Activated naive CD4-positive, alpha-beta T cell treated with anti-CD3 and anti-CD28 coated beads for 36 hours (primary cell): ENCODE measurements at regions of chr7 and their contacts with region 1.

Region 1: DNA sequence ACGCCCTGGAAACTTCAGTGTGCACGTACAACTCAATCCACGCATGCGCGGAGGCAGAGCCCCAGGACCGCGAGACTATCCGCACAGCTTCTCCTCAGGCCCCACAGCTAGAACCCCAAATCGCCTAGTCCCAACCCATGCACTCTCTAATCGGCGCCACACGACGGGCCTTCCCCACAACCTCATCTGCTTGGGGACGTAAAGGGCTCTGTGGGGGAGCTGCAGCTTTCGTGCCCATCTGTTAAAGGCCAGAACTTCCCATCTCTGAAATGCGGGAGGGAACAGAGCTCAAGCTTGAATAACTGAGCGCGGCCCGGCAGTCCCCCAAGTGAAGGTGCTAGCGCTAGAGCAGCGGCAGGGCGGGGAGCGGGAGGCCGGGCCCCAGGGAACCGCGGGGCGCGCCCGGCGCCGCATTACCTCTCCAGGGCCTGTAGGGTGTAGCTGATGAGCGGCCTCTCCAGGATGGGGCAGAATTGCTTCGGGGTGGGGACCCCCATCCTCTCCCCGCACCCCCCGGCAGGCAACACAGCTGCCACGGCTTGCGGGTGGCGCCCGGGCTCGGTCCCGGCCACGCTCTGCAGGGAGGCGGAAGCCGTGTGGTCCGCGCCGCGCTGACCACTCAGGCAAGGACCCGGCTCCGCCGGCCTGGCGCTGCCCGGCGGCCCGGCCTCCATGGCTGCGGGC is 547 bp downstream of the CRPPA start:
- DNase-seq: peak; percentile 90
- H3K4me3 Mint-ChIP-seq: peak overlapping the region; percentile 92
- H3K27ac Mint-ChIP-seq: peak overlapping the region; percentile 89
- H3K4me1 Mint-ChIP-seq: peaks cover 13% of the 10 kb centered on the region
- H3K27me3 Mint-ChIP-seq: no peaks in the 10 kb centered on the region

Region 2: DNA sequence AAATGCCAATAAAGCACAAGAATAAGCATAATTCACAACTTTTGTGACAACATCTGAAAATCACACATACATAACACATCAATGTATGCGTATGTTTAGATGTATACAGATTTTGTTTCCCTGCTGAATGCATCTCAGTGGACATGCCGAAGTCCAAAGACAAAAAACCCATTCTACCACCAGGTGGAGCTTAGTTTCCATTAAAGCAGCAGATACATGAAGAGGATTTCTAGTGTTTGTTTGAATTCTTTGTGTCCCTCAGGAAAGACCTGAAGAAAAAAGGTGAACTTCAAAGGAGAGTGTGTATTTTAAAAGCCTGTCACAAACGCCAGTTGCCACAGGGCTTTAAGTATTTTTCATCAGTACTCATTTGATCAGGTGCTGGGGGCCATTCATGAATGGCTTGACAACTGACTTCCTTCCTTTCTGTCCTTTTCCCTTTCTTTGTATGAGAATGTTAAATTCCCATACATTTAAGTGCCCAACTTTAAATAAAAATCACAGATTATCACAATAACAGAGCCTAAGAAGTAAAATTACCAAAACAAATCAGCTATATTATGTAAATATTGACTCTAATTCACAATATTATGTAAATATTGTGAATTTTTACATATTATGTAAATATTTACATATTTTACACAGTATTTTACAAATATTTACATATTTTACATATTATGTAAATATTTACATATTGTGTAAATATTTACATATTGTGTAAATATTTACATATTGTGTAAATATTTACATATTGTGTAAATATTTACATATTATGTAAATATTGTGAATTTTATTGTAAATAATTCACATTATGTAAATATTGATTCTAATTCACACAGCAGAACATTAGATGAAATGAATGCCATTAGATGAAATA is 342.5 kb before region 1 on chr7:
- CTCF ChIA-PET with region 1: no interaction called
- intact Hi-C with region 1: loop called (anchors 1 kb)
- DNase-seq: peak; percentile 30
- H3K4me3 Mint-ChIP-seq: no peak overlapping the region
- H3K27ac Mint-ChIP-seq: no peak overlapping the region
- H3K4me1 Mint-ChIP-seq: no peaks in the 10 kb centered on the region
- H3K27me3 Mint-ChIP-seq: no peaks in the 10 kb centered on the region

Region 3: GRCh38 chr7:16431646-16432424 is 11.0 kb after region 1 on chr7:
- CTCF ChIA-PET with region 1: interaction called, 23 read pairs
- intact Hi-C with region 1: no loop called
- DNase-seq: peak; percentile 54
- H3K4me3 Mint-ChIP-seq: no peak overlapping the region
- H3K27ac Mint-ChIP-seq: no peak overlapping the region
- H3K4me1 Mint-ChIP-seq: no peaks in the 10 kb centered on the region
- H3K27me3 Mint-ChIP-seq: no peaks in the 10 kb centered on the region

Region 4: DNA sequence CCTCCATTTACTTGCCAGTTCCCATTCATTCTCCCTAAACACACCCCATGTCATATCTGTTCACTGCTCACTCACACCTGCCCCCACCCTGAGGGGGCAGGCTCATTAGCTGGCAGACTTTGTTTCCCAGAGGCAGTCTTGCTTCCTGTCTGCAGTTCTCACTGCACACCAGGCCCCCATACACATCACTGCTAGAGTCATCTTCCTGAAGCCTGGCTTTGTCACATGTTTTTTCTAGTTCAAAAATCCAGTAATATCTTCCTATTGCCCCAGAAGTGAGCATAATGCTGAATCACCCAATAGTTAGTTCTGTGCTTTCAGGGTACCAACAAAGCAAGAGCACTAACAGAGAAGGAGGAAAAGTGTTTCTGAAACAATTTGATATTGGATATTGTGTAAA is 107.7 kb after region 1 on chr7:
- CTCF ChIA-PET with region 1: no interaction called
- intact Hi-C with region 1: no loop called
- DNase-seq: peak; percentile 16
- H3K4me3 Mint-ChIP-seq: no peak overlapping the region
- H3K27ac Mint-ChIP-seq: no peak overlapping the region
- H3K4me1 Mint-ChIP-seq: peaks cover 4% of the 10 kb centered on the region
- H3K27me3 Mint-ChIP-seq: no peaks in the 10 kb centered on the region

Region 5: GRCh38 chr7:16619979-16620408 is 199.2 kb after region 1 on chr7:
- CTCF ChIA-PET with region 1: no interaction called
- intact Hi-C with region 1: loop called (anchors 1 kb)
- DNase-seq: peak; percentile 33
- H3K4me3 Mint-ChIP-seq: peak overlapping the region; percentile 23
- H3K27ac Mint-ChIP-seq: peak overlapping the region; percentile 81
- H3K4me1 Mint-ChIP-seq: peaks cover 13% of the 10 kb centered on the region
- H3K27me3 Mint-ChIP-seq: no peaks in the 10 kb centered on the region

Region 6: DNA sequence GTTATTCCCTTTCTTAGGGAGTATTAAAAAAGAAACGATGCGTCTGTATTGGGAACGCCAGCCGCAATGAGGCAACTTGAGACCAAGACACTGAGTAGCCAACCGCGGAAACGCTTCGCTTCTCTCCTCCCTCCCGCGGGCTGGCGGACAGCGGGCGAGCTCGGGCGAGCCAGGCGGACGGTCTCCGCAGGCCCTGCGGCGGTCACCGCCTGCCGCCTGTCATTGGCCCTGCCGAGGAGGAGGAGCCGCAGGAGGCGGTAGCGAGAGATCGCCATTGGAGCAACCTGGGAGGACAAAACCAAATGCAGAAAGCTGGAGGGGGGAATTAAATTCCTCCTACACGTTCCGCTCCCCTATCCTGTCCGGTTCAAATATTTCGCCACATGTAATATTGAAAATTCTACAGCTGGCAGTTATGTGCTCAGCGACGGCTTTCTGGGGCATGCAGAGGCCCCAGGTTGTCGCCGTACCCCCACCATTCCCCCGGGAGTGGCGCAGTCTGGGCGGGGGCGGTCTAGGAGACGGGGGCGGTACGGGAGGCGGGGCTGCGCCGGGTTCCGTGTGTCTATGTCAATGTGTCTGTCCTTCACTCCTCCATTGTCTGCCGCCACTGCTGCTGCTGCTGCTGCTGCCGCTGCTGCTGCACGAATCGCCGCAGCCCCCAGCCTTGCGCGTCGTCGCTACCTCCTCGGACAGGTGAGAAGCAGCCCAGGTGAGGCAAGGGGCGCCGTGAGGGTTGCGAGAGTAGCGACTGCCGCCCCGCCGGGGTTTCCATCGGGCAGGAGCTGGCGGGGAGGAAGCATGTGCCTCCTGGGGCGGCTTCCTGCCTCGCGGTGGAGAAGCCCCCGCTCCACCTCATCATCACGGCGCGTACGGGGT is 225.0 kb after region 1 on chr7 and contains the starts of genes ANKMY2 and BZW2:
- CTCF ChIA-PET with region 1: no interaction called
- intact Hi-C with region 1: loop called (anchors 1 kb)
- DNase-seq: peak; percentile 94
- H3K4me3 Mint-ChIP-seq: peak within 1 kb of the TSS; percentile 97
- H3K27ac Mint-ChIP-seq: peak within 1 kb of the TSS; percentile 95
- H3K4me1 Mint-ChIP-seq: peaks cover 53% of the 10 kb centered on the region
- H3K27me3 Mint-ChIP-seq: no peaks in the 10 kb centered on the region
- total RNA-seq, gene ANKMY2: 4.6 to 4.7 TPM
- total RNA-seq, gene BZW2: 118 to 122 TPM

Region 7: GRCh38 chr7:16753102-16753931 is 332.5 kb after region 1 on chr7 and contains the start of gene TSPAN13:
- CTCF ChIA-PET with region 1: no interaction called
- intact Hi-C with region 1: loop called (anchors 2 kb)
- DNase-seq: peak; percentile 71
- H3K4me3 Mint-ChIP-seq: peak within 1 kb of the TSS; percentile 76
- H3K27ac Mint-ChIP-seq: no peak within 1 kb of the TSS
- H3K4me1 Mint-ChIP-seq: peaks cover 10% of the 10 kb centered on the region
- H3K27me3 Mint-ChIP-seq: peaks cover 31% of the 10 kb centered on the region
- total RNA-seq, gene TSPAN13: 0.35 to 0.52 TPM

Region 8: DNA sequence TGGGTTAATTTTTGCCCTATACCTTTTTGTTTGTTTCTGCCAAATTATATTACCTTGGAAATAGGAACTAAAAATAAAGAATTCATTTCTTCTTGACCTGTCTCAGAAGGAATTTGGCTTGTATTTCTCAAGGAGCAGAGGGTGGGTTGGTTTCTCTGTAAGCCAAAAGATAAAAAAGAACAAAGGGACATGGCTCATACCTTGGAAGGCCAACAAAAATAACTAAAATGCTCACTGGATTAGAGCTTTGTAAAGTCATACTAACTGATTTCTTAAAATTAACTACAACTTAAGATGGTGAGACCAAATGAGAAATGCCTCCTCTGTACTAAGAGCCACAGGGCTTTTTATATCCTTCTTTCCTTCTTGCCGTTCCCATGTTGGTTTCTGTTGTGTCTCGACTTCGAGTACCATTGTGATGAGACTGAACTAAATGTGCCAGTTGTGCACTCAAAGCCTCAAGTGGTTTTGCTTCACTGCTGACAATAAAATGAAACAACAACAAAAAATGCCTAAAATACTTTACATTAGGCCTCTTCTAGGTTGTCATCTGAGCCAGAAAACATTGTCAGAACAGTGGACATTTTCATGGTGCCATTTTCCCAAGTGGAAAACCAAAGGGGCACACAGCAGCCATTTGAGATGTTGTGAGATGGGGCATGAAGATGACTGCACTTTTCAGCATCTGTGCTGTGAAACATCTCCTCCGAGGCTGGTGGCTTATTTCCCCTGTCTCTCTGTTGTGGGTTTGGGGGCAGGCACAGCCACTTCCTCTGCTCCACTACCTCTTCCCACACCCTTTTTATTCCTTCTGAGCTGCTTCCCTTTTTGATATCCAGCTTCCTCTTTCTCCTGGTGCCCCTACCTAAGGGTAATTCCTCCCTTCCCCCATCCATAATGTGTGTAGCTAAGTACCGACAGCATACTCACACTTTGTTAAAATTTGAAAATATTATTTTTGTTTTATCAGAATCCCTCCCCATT is 512.8 kb after region 1 on chr7:
- CTCF ChIA-PET with region 1: no interaction called
- intact Hi-C with region 1: loop called (anchors 5 kb)
- DNase-seq: peak; percentile 35
- H3K4me3 Mint-ChIP-seq: no peak overlapping the region
- H3K27ac Mint-ChIP-seq: no peak overlapping the region
- H3K4me1 Mint-ChIP-seq: peaks cover 48% of the 10 kb centered on the region
- H3K27me3 Mint-ChIP-seq: peaks cover 2% of the 10 kb centered on the region